ENCODE measurements at regions of chr10 and their contacts with region 1.

Region 1: DNA sequence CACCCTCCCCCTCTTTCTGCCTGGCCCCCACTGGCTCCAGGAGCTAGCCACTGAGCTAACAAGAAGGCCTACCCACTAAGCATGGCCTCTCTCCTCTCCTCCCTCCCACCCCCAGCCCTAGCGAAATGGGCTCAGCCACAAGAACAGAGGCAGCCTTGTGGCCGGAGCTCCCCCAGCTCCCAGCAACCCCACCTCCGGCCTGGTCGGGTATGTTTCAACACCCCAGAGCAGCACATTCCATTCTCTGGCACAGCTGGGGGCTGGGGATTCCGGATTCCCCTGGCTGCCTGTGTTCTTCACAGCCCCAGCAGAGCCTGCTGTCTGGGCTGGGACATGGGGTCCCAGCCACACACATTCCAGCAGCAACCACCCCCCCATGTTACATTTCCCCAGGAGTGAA is 9.0 kb downstream of the SFRP5 start:
- DNase-seq: no peak
- H3K4me3 ChIP-seq: no peak overlapping the region
- H3K27ac ChIP-seq: peak overlapping the region in 30 of 59 donors; percentile 1 to 73 (median 44)
- H3K27me3 ChIP-seq: no peaks in the 10 kb centered on the region
- CTCF ChIP-seq: no peak

Region 2: DNA sequence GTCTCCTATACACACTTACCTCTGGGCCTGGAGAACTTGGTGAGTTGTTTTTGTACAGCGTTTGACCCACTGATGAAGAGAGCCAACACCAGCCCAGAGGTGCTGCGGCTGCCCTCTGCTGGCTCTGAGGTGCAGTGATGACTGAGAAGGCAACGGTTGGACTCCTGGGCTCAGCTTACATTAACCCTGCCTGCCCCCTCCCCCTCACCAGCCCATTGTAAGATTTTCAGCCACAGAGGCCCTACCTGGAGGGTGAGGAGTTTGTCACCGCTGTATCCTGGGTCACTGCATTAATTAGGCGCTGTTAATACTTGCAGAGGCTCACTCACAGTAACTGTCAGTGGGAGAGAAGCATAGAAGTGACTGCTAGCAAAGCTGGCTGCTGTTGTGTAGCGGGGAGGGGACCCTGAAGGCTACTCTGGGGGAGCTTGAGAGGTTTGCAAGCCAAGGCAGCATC is 209.2 kb before region 1 on chr10:
- intact Hi-C with region 1: no loop called
- DNase-seq: peak in 9 of 10 donors; percentile 62 to 81 (median 75)
- H3K4me3 ChIP-seq: no peak overlapping the region
- H3K27ac ChIP-seq: peak overlapping the region in 6 of 59 donors; percentile 6 to 66 (median 20)
- H3K27me3 ChIP-seq: no peaks in the 10 kb centered on the region
- CTCF ChIP-seq: peak; percentile 40 to 93 (median 80)

Region 3: GRCh38 chr10:97869091-97870042 is 106.6 kb after region 1 on chr10:
- intact Hi-C with region 1: loop called in 1 of 2 experiments (anchors 5 kb)
- DNase-seq: peak; percentile 37 to 96 (median 84)
- H3K4me3 ChIP-seq: peak overlapping the region in 8 of 59 donors; percentile 1 to 29 (median 15)
- H3K27ac ChIP-seq: peak overlapping the region in 11 of 59 donors; percentile 3 to 53 (median 33)
- H3K27me3 ChIP-seq: peaks cover 0 to 18% (median 0%) of the 10 kb centered on the region in 45 donors
- CTCF ChIP-seq: peak; percentile 49 to 84 (median 71)

Region 4: GRCh38 chr10:98038288-98038687 is 275.5 kb after region 1 on chr10:
- intact Hi-C with region 1: loop called in 1 of 2 experiments (anchors 5 kb)
- DNase-seq: no peak
- H3K4me3 ChIP-seq: no peak overlapping the region
- H3K27ac ChIP-seq: no peak overlapping the region
- H3K27me3 ChIP-seq: peaks cover 0 to 6% (median 0%) of the 10 kb centered on the region in 45 donors
- CTCF ChIP-seq: no peak